ENCODE measurements at regions of chr12 and their contacts with region 1.

Region 1: GRCh38 chr12:101697197-101697929 is at the start of gene CHPT1:
- DNase-seq: peak; percentile 57
- H3K4me3 Mint-ChIP-seq: peak within 1 kb of the TSS; percentile 87
- H3K27ac Mint-ChIP-seq: peak within 1 kb of the TSS; percentile 80
- H3K4me1 Mint-ChIP-seq: peaks cover 45% of the 10 kb centered on the region
- H3K27me3 Mint-ChIP-seq: no peaks in the 10 kb centered on the region
- total RNA-seq, gene CHPT1: 17.1 to 20.0 TPM

Region 2: DNA sequence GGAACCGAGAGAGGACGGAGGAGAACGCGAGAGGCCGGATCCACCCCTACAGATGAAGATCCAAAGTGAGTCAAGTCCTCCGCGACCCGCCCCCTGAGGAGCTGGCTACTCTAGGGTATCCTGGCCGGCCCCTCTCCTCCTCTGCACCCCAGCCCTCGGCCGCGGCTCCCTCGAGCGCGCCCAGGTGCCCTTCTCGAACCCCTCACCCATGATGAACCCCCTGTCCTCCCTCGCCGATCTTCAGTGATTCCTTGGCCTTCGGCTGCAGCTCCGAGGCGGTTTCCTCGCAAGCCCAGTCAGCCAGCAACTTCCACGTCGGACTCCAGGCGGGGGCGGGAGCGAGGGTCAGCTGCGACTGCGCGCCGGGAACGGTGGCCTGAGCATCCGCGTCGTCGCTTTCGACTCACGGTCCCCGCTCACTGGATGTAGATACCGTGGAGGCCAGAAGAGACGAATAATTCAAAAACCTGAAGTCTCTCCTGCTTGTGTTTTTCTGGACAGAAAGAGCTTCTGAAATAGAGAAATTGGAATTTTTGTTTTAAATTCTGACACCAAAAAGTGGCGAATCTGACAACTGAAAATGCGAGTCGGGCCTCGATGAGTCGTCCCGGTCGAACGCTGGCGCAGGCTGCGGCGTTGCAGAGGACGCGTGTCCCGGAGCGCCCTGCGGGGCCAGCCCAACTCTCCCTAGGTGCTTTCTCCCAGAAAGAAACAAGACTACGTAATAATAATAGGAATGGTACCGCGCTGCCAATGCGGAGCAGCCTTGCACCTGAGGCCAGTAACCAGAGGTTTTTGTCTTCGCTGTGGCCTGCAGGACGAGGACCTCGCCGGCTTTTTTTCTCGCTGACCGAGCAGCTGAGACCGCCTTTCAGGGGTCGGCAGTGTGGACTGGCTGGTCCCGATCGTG is 289.7 kb before region 1 on chr12 and contains the start of gene ARL1:
- CTCF ChIA-PET with region 1: interaction called, 4 read pairs
- intact Hi-C with region 1: loop called (anchors 2 kb)
- DNase-seq: peak; percentile 84
- H3K4me3 Mint-ChIP-seq: peak within 1 kb of the TSS; percentile 93
- H3K27ac Mint-ChIP-seq: peak within 1 kb of the TSS; percentile 90
- H3K4me1 Mint-ChIP-seq: peaks cover 19% of the 10 kb centered on the region
- H3K27me3 Mint-ChIP-seq: peaks cover 6% of the 10 kb centered on the region
- total RNA-seq, gene ARL1: 44.1 to 48.4 TPM

Region 3: GRCh38 chr12:101564912-101565311 is 132.5 kb before region 1 on chr12:
- CTCF ChIA-PET with region 1: no interaction called
- intact Hi-C with region 1: loop called (anchors 1 kb)
- DNase-seq: peak; percentile 14
- H3K4me3 Mint-ChIP-seq: no peak overlapping the region
- H3K27ac Mint-ChIP-seq: no peak overlapping the region
- H3K4me1 Mint-ChIP-seq: peaks cover 21% of the 10 kb centered on the region
- H3K27me3 Mint-ChIP-seq: peaks cover 10% of the 10 kb centered on the region

Region 4: GRCh38 chr12:101570047-101570446 is 127.3 kb before region 1 on chr12:
- CTCF ChIA-PET with region 1: no interaction called
- intact Hi-C with region 1: loop called (anchors 1 kb)
- DNase-seq: no peak
- H3K4me3 Mint-ChIP-seq: no peak overlapping the region
- H3K27ac Mint-ChIP-seq: no peak overlapping the region
- H3K4me1 Mint-ChIP-seq: peaks cover 19% of the 10 kb centered on the region
- H3K27me3 Mint-ChIP-seq: peaks cover 5% of the 10 kb centered on the region

Region 5: GRCh38 chr12:101604132-101604531 is 93.2 kb before region 1 on chr12:
- CTCF ChIA-PET with region 1: no interaction called
- intact Hi-C with region 1: loop called (anchors 5 kb)
- DNase-seq: no peak
- H3K4me3 Mint-ChIP-seq: no peak overlapping the region
- H3K27ac Mint-ChIP-seq: no peak overlapping the region
- H3K4me1 Mint-ChIP-seq: peaks cover 9% of the 10 kb centered on the region
- H3K27me3 Mint-ChIP-seq: no peaks in the 10 kb centered on the region

Region 6: DNA sequence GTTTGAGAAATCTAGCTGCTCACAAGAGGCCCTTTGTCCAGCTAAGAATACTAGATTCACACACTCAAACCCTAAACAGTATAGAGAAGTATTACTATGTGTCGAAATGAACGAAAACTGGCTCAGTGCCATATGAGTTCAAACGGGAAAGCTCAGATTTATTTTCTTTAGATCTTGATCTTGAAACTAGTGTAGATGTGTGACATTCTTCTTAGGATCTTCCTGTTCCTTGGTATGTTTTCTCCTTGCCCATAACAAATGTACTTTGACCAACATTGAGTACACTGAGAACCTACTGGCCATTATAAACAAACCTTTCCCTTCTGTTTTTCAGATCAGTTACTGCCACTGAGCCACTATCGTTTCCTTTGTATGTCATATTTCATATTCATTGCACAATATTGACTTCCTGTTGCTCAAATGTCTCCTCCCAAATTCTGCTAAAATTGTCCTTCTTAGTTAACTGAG is 81.3 kb before region 1 on chr12:
- CTCF ChIA-PET with region 1: no interaction called
- intact Hi-C with region 1: loop called (anchors 5 kb)
- DNase-seq: peak; percentile 31
- H3K4me3 Mint-ChIP-seq: no peak overlapping the region
- H3K27ac Mint-ChIP-seq: no peak overlapping the region
- H3K4me1 Mint-ChIP-seq: peaks cover 17% of the 10 kb centered on the region
- H3K27me3 Mint-ChIP-seq: peaks cover 2% of the 10 kb centered on the region

Region 7: DNA sequence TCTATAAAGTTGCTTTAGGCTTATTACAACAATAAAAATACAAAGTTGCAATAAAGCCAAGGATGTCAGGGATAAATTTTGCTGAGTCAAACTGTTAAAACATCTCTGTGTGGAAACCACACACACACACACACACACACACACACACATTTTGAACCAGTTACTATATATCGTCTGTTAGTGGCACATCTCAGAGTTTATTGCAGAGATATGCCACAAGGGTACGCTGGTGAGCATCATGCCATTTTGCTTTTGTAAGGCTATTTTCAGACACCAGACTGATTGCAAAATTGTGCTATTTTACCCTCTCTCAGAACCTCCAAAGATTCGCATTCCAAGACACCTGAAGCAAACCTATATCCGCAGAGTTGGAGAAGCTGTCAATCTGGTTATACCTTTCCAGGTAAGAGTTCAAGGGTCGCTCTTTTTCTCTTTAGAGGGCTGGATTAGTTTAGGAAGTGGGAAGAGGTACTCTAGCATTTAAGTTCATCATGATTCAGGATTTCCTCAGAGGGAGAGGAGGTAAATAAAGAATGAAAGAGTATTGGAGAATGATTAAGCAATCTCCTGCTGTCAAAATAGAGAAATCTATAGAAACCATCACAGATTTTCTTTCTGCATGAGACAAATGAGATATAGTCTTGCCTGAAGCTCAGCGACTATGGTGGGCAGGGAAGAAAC is 27.2 kb before region 1 on chr12:
- CTCF ChIA-PET with region 1: interaction called, 6 read pairs
- intact Hi-C with region 1: loop called (anchors 1 kb)
- DNase-seq: peak; percentile 70
- H3K4me3 Mint-ChIP-seq: no peak overlapping the region
- H3K27ac Mint-ChIP-seq: no peak overlapping the region
- H3K4me1 Mint-ChIP-seq: peaks cover 22% of the 10 kb centered on the region
- H3K27me3 Mint-ChIP-seq: peaks cover 2% of the 10 kb centered on the region